Kidney (tissue), 22 donors: ENCODE measurements at regions of chr12 and their contacts with region 1.

Region 1: DNA sequence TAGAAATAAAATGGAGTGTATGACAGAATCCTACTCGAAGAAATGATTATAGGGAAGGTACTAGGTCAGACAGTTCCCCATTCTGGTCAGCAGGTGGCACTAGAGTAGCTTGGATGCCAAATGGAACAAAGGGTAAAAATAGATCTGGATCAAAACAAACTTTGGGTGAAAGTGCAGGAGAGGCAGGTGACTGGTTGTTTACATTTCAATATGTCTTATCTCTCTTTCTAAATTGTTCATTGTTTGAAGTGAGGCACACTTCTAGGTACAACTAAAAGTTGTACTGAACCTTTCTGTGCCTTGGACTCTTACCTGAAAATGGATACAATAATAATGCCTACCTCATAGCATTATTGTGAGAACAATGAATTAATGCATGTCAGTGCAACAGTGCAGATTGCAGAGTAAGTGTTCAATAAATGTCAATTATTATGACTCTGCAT is 62.0 kb upstream of the OSBPL8 start:
- DNase-seq: peak in 4 of 5 donors; percentile 70 to 84 (median 77)
- H3K4me3 ChIP-seq: peak overlapping the region in 1 of 3 donors; percentile 6
- H3K27ac ChIP-seq: no peak overlapping the region
- H3K4me1 ChIP-seq: no peaks in the 10 kb centered on the region
- H3K27me3 ChIP-seq: no peaks in the 10 kb centered on the region
- CTCF ChIP-seq: peak; percentile 96

Region 2: GRCh38 chr12:76720068-76720467 is 98.5 kb after region 1 on chr12:
- intact Hi-C with region 1: no loop called
- DNase-seq: no peak
- H3K4me3 ChIP-seq: no peak overlapping the region
- H3K27ac ChIP-seq: no peak overlapping the region
- H3K4me1 ChIP-seq: no peaks in the 10 kb centered on the region
- H3K27me3 ChIP-seq: no peaks in the 10 kb centered on the region
- CTCF ChIP-seq: no peak

Region 3: GRCh38 chr12:76790564-76791552 is 169.3 kb after region 1 on chr12:
- intact Hi-C with region 1: loop called (anchors 5 kb)
- DNase-seq: peak in 2 of 5 donors; percentile 24 to 38
- H3K4me3 ChIP-seq: no peak overlapping the region
- H3K27ac ChIP-seq: no peak overlapping the region
- H3K4me1 ChIP-seq: peaks cover 0 to 3% (median 0%) of the 10 kb centered on the region in 3 donors
- H3K27me3 ChIP-seq: no peaks in the 10 kb centered on the region
- CTCF ChIP-seq: peak; percentile 47

Region 4: GRCh38 chr12:77010691-77011548 is 389.3 kb after region 1 on chr12:
- intact Hi-C with region 1: loop called (anchors 10 kb)
- DNase-seq: peak; percentile 80 to 91 (median 82)
- H3K4me3 ChIP-seq: peak overlapping the region in 2 of 3 donors; percentile 3 to 13
- H3K27ac ChIP-seq: no peak overlapping the region
- H3K4me1 ChIP-seq: no peaks in the 10 kb centered on the region
- H3K27me3 ChIP-seq: no peaks in the 10 kb centered on the region
- CTCF ChIP-seq: peak; percentile 87